WTC11 (cell line): ENCODE measurements at regions of chr9 and their contacts with region 1.

Region 1: DNA sequence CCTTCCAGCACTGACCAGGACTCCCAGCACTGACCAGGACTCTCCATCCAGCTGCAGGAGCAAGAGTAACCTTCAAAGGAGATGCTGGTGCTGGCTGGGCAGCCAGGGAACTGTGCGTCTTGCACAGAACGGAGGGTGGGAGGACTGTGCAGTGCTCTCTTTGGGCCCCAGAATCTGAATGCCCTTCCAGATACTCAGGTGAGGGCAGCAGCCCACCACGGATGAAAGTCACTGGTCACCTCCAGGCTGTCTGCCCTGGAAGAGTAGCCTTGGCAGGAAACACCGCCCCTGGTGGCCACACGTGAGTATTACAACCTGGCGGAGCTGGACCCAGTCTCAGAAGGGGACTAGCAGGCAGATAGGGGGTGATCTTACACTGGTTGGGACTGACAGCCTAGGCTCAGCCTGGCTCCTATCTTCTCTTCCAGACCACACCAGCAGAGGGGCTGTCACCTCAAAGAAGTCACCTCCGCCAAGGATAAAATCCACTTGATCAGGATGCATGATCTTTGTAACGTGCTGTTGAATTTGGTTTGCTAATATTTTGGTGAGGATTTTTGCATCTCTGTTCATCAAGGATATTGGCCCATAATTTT is 4.8 kb upstream of the SARDH start:
- DNase-seq: peak; percentile 96
- ATAC-seq: peak; percentile 93
- H3K4me3 Mint-ChIP-seq: no peak overlapping the region
- H3K27ac Mint-ChIP-seq: no peak overlapping the region
- H3K4me1 Mint-ChIP-seq: peaks cover under 1% of the 10 kb centered on the region; the same call in 1 of the 2 replicates
- H3K27me3 Mint-ChIP-seq: peaks cover 7% of the 10 kb centered on the region
- CTCF ChIP-seq: peak; percentile 100

Region 2: GRCh38 chr9:133589454-133590227 is 153.3 kb before region 1 on chr9:
- CTCF ChIA-PET with region 1: interaction called, 11 read pairs
- POLR2A ChIA-PET with region 1: no interaction called
- DNase-seq: peak; percentile 79
- ATAC-seq: peak; percentile 78
- H3K4me3 Mint-ChIP-seq: no peak overlapping the region
- H3K27ac Mint-ChIP-seq: no peak overlapping the region
- H3K4me1 Mint-ChIP-seq: peaks cover 14% of the 10 kb centered on the region
- H3K27me3 Mint-ChIP-seq: peaks cover 6% of the 10 kb centered on the region; the same call in 1 of the 2 replicates
- CTCF ChIP-seq: peak; percentile 92

Region 3: DNA sequence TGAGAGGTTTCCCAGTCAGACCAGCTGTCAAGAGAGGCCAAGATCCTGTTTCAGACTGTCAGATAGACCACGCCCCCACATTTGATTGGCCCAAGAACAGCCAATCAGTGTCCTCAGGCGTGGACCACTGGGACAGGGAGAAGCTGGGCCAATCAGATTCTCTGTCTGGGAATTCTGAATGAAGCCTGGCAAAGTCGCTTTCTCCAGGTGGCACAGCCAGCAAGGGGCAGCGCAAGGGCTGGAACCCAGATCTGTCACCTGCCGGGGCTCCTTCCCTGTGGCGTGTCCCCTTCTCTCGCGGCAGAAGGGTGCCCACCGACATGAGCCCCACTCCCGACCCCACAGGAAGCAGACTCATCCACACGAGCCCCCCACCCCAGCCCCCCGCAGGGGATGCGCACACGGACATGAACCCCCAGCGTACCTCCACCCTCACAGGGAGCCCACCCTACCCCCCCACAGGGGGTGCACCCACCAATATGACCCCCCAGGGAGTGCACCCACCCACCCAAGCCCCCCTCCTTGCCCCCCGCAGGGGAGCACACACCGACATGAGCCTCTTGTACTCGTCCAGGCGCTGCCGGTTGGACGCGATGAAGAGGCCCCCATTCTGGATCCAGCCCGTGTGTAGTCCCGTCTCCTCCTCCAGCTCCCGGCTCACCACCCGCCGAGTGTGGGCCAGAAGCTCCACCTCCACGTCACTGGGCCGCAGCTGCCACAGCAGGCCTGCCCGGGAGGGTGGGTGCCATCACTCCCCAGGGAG is 10.9 kb before region 1 on chr9:
- CTCF ChIA-PET with region 1: interaction called, 39 read pairs
- POLR2A ChIA-PET with region 1: no interaction called
- DNase-seq: peak; percentile 66
- ATAC-seq: peak; percentile 57
- H3K4me3 Mint-ChIP-seq: no peak overlapping the region
- H3K27ac Mint-ChIP-seq: no peak overlapping the region
- H3K4me1 Mint-ChIP-seq: peaks cover 26% of the 10 kb centered on the region
- H3K27me3 Mint-ChIP-seq: no peaks in the 10 kb centered on the region
- CTCF ChIP-seq: no peak

Region 4: DNA sequence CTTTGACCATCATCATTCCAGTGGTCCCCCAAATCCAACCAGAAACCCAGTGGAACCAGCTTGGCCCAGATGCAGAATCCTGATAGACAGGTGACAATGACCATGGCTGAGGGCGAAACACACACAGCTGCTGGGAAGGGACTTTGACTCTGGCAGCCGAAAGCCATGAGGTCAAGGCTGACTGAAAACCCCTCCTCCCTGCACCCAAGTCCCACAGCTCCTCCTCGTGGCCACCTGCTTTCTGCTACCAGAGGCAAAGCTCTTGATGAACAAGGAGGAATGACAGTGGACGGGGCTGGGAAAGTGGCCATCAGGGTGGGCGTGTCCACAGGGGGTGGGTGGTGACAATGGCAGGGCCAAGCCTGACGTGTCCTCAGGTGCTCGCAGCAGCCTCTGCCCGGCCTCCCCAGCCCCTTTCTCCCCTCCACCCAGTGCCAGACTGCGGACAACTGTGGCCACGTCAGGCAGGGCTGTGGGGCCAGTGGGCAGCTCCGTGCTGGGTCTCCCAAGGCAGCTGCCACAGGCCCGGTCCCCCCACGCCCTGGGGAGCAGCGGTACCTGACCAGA is 26.0 kb after region 1 on chr9:
- CTCF ChIA-PET with region 1: interaction called, 52 read pairs
- POLR2A ChIA-PET with region 1: no interaction called
- DNase-seq: peak; percentile 70
- ATAC-seq: peak; percentile 65; the same call in 1 of the 2 replicates
- H3K4me3 Mint-ChIP-seq: no peak overlapping the region
- H3K27ac Mint-ChIP-seq: no peak overlapping the region
- H3K4me1 Mint-ChIP-seq: no peaks in the 10 kb centered on the region
- H3K27me3 Mint-ChIP-seq: no peaks in the 10 kb centered on the region
- CTCF ChIP-seq: no peak

Region 5: GRCh38 chr9:133787754-133788025 is 44.7 kb after region 1 on chr9:
- CTCF ChIA-PET with region 1: interaction called, 27 read pairs
- POLR2A ChIA-PET with region 1: no interaction called
- DNase-seq: peak; percentile 73
- ATAC-seq: peak; percentile 98
- H3K4me3 Mint-ChIP-seq: no peak overlapping the region
- H3K27ac Mint-ChIP-seq: no peak overlapping the region
- H3K4me1 Mint-ChIP-seq: no peaks in the 10 kb centered on the region
- H3K27me3 Mint-ChIP-seq: no peaks in the 10 kb centered on the region
- CTCF ChIP-seq: no peak

Region 6: DNA sequence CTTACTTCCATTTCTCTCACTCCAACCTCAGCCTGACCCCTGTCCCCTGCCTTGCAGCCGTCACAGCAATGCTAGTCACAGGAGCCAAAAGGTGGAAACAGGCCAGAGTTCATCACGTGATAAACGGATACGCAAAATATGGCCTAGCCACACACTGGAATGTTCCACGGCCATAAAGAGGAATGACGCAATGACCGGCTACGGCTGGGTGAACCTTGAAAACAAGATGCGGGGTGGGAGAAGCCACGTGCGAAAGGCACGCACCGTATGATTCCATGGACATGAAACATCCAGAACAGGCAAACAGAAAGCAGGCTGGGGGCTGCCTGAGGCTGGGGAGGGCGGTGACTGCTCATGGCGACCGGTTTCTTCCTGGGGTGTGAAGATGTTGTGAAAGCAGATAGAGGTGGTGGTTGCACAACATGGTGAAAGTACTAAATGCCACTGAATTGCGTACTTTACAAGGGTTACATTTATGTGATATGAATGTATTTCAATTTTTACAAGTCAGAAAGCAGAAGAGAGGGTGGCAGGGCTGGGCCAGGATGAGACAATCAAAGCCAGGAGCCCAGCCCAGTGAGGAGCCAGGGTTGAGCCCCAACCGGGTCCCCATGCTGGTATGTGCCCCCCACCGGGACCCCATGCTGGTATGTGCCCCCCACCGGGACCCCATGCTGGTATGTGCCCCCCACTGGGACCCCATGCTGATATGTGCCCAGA is 113.0 kb after region 1 on chr9:
- CTCF ChIA-PET with region 1: no interaction called
- POLR2A ChIA-PET with region 1: no interaction called
- DNase-seq: no peak
- ATAC-seq: no peak
- H3K4me3 Mint-ChIP-seq: no peak overlapping the region
- H3K27ac Mint-ChIP-seq: peak overlapping the region; percentile 57
- H3K4me1 Mint-ChIP-seq: peaks cover 3% of the 10 kb centered on the region; the same call in 1 of the 2 replicates
- H3K27me3 Mint-ChIP-seq: no peaks in the 10 kb centered on the region
- CTCF ChIP-seq: no peak